Endothelial cell of umbilical vein (primary cell): ENCODE measurements at regions of chr1 and their contacts with region 1.

Region 1: DNA sequence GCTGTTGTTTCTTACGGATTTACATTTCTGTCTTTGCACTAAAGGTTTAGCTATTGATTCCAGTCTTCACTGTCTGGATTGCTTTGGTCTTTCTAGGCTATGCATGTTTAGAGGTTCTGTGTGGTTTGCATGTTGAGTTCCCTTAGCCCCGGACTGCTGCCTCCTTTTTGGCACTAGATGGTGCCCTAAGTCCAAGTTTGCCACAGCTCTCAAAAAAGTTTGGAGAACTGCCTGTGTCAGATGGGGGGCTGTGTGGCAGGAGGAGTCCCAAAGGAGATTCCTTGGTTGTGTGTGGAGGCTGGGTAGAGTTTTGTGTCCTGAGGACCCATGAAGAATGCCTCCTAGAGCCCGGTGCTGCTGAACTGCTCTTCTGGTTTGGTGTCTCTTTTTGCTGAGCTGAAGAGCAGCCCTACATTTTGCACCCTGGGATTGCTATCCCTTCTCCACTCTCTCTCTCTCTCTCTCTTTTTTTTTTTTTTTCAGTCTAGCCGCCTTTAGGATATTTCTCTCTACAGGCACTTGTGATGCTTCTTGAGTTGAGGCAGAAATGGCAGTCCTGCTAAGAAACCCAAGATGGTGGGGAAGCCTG is 74.4 kb downstream of the PTGS2 start:
- DNase-seq: peak; percentile 75
- H3K4me3 ChIP-seq: no peak overlapping the region
- H3K27ac ChIP-seq: no peak overlapping the region
- H3K4me1 ChIP-seq: no peaks in the 10 kb centered on the region
- H3K27me3 ChIP-seq: no peaks in the 10 kb centered on the region
- CTCF ChIP-seq: peak; percentile 75 to 83
- POLR2A ChIP-seq: no peak

Region 2: GRCh38 chr1:186375088-186375953 is 230.5 kb before region 1 on chr1 and contains the starts of genes ODR4 and TPR:
- CTCF ChIA-PET with region 1: interaction called, 11 read pairs
- POLR2A ChIA-PET with region 1: no interaction called
- dilution Hi-C with region 1: no loop called
- intact Hi-C with region 1: no loop called
- DNase-seq: peak; percentile 99
- H3K4me3 ChIP-seq: peak within 1 kb of the TSS; percentile 65 to 91 (median 68)
- H3K27ac ChIP-seq: peak within 1 kb of the TSS; percentile 63
- H3K4me1 ChIP-seq: peaks cover 18% of the 10 kb centered on the region
- H3K27me3 ChIP-seq: no peaks in the 10 kb centered on the region
- CTCF ChIP-seq: peak; percentile 90 to 98
- POLR2A ChIP-seq: peak; percentile 83
- total RNA-seq, gene ODR4: 17.3 and 18.6 TPM in 2 replicates
- total RNA-seq, gene TPR: 107 and 118 TPM in 2 replicates

Region 3: GRCh38 chr1:186482661-186483255 is 123.1 kb before region 1 on chr1:
- CTCF ChIA-PET with region 1: interaction called, 23 read pairs
- POLR2A ChIA-PET with region 1: no interaction called
- dilution Hi-C with region 1: no loop called
- intact Hi-C with region 1: loop called (anchors 1 kb)
- DNase-seq: peak; percentile 90
- H3K4me3 ChIP-seq: no peak overlapping the region
- H3K27ac ChIP-seq: peak overlapping the region; percentile 19
- H3K4me1 ChIP-seq: peaks cover 16% of the 10 kb centered on the region
- H3K27me3 ChIP-seq: no peaks in the 10 kb centered on the region
- CTCF ChIP-seq: peak; percentile 81 to 87
- POLR2A ChIP-seq: no peak

Region 4: DNA sequence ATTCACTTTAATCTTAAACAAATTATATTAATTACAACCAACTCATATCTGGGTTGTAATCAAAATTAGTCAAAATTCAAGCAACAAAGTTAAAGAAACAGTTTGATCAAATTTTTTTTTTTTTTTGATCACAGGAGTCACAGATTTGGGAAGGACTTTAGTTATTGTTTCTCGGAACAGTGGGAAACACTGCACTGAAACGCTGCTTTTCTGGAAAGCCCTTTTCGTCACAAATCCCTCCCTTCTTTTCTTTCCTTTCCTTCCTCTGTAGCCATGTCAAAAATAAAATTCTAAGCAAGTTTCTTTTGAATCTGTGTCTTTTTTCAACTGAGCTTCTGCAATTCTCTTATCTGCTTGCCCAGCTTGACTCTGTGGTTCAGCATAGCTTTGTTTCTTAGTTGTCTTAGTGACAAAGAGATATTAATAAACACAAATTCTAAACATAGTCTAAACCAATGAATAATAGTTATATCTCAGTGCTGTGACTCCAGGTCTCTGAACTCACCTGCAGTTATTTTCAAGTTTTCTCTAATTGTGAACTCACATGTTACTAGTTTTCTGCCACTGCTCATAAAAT is 20.6 kb after region 1 on chr1:
- CTCF ChIA-PET with region 1: interaction called, 11 read pairs
- POLR2A ChIA-PET with region 1: no interaction called
- dilution Hi-C with region 1: no loop called
- intact Hi-C with region 1: no loop called
- DNase-seq: peak; percentile 85
- H3K4me3 ChIP-seq: no peak overlapping the region
- H3K27ac ChIP-seq: peak overlapping the region; percentile 66
- H3K4me1 ChIP-seq: peaks cover 18% of the 10 kb centered on the region
- H3K27me3 ChIP-seq: no peaks in the 10 kb centered on the region
- CTCF ChIP-seq: no peak
- POLR2A ChIP-seq: no peak

Region 5: GRCh38 chr1:186806477-186806876 is 200.6 kb after region 1 on chr1:
- CTCF ChIA-PET with region 1: interaction called, 18 read pairs
- POLR2A ChIA-PET with region 1: no interaction called
- dilution Hi-C with region 1: no loop called
- intact Hi-C with region 1: loop called (anchors 1 kb)
- DNase-seq: peak; percentile 73
- H3K4me3 ChIP-seq: no peak overlapping the region
- H3K27ac ChIP-seq: no peak overlapping the region
- H3K4me1 ChIP-seq: no peaks in the 10 kb centered on the region
- H3K27me3 ChIP-seq: no peaks in the 10 kb centered on the region
- CTCF ChIP-seq: peak; percentile 32 to 49
- POLR2A ChIP-seq: no peak

Region 6: DNA sequence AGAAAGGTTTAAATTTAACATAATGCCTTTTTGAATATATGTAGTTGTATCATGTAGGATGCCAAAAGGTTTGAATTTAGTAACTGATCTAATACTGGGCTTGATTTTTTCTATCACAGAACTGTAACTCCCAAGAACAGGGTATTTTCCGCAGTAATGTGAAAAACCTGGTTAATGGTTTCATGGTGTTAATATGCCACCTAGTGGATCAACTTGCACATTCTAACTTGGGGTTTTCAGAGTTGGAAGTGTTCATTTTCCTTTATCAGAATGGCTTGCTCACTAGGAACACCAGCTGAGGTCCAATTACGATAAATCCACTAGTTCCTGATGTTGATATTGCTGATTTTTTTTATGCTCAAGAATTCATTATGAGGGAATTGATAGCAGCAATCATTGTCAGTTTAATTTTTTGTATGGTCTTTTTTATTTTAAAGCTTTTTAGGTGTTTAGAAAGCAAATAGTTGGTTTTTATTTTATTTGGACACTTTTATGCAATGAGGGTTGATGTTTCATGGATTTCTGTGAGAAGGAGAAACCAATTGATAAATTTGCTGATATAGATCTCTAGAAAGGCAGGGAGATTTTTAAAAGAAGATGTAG is 380.1 kb after region 1 on chr1:
- CTCF ChIA-PET with region 1: interaction called, 46 read pairs
- POLR2A ChIA-PET with region 1: no interaction called
- dilution Hi-C with region 1: no loop called
- intact Hi-C with region 1: loop called (anchors 1 kb)
- DNase-seq: peak; percentile 90
- H3K4me3 ChIP-seq: no peak overlapping the region
- H3K27ac ChIP-seq: peak overlapping the region; percentile 76
- H3K4me1 ChIP-seq: peaks cover 16% of the 10 kb centered on the region
- H3K27me3 ChIP-seq: no peaks in the 10 kb centered on the region
- CTCF ChIP-seq: peak; percentile 45 to 48
- POLR2A ChIP-seq: no peak

Region 7: GRCh38 chr1:187257476-187257875 is 651.6 kb after region 1 on chr1:
- CTCF ChIA-PET with region 1: no interaction called
- POLR2A ChIA-PET with region 1: no interaction called
- dilution Hi-C with region 1: no loop called
- intact Hi-C with region 1: loop called (anchors 10 kb)
- DNase-seq: no peak
- H3K4me3 ChIP-seq: no peak overlapping the region
- H3K27ac ChIP-seq: no peak overlapping the region
- H3K4me1 ChIP-seq: no peaks in the 10 kb centered on the region
- H3K27me3 ChIP-seq: no peaks in the 10 kb centered on the region
- CTCF ChIP-seq: no peak
- POLR2A ChIP-seq: no peak